ENCODE measurements at regions of chr5 and their contacts with region 1.

Region 1: DNA sequence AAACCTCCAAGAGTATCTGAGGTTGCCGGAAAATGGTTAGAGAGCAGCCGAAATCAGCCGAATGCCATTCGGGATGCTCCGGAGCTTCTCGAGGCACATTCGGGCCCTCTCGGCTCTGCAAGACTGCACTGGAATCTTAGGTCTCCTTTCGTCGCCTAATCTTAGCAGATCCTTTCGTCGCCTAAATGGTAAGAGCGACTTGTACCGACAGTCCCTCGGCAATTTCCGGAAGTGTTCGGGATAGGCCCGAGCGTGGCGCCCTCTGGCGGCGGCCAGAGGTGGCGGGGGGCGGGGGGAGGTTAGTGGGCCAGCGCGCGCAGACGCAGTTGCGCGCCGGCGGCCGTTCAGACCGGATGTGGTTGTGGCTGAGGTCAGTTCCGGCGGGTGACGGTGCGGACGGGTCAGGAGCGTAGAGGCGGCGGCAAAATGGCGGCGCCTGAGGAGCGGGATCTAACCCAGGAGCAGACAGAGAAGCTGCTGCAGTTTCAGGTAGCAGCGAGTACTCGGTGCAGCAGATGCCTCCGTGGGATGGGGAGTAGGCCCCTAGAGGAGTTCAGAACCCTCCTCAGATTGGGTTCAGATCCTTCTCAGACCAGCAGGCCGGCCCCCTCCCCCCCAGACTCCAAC is at the start of gene FAF2:
- DNase-seq: peak; percentile 92 to 99 (median 98)
- H3K4me3 ChIP-seq: peak within 1 kb of the TSS; percentile 98
- H3K4me3 Mint-ChIP-seq: peak within 1 kb of the TSS; percentile 91 to 99 (median 98)
- H3K27ac ChIP-seq: peak within 1 kb of the TSS; percentile 98
- H3K27ac Mint-ChIP-seq: peak within 1 kb of the TSS; percentile 96 to 100 (median 99)
- H3K4me1 ChIP-seq: peaks cover 25% of the 10 kb centered on the region
- H3K4me1 Mint-ChIP-seq: peaks cover 34 to 54% (median 46%) of the 10 kb centered on the region in 3 donors
- H3K27me3 ChIP-seq: no peaks in the 10 kb centered on the region
- H3K27me3 Mint-ChIP-seq: peaks cover 0 to 10% of the 10 kb centered on the region in 2 donors
- total RNA-seq, gene FAF2: 45.1 to 45.2 TPM

Region 2: GRCh38 chr5:176537608-176538504 is 89.8 kb after region 1 on chr5:
- CTCF ChIA-PET with region 1: interaction called, 33 read pairs
- POLR2A ChIA-PET with region 1: interaction called, 50 read pairs
- DNase-seq: peak; percentile 96 to 99 (median 97)
- H3K4me3 ChIP-seq: peak overlapping the region; percentile 99
- H3K4me3 Mint-ChIP-seq: peak overlapping the region; percentile 98 to 100 (median 99)
- H3K27ac ChIP-seq: peak overlapping the region; percentile 100
- H3K27ac Mint-ChIP-seq: peak overlapping the region; percentile 98 to 100 (median 99)
- H3K4me1 ChIP-seq: peaks cover 74% of the 10 kb centered on the region
- H3K4me1 Mint-ChIP-seq: peaks cover 72 to 77% (median 76%) of the 10 kb centered on the region in 3 donors
- H3K27me3 ChIP-seq: no peaks in the 10 kb centered on the region
- H3K27me3 Mint-ChIP-seq: peaks cover 0 to 9% of the 10 kb centered on the region in 2 donors

Region 3: GRCh38 chr5:176543428-176544173 is 95.5 kb after region 1 on chr5:
- CTCF ChIA-PET with region 1: interaction called, 33 read pairs
- POLR2A ChIA-PET with region 1: interaction called, 50 read pairs
- DNase-seq: peak; percentile 60 to 82 (median 74)
- H3K4me3 ChIP-seq: peak overlapping the region; percentile 92
- H3K4me3 Mint-ChIP-seq: peak overlapping the region; percentile 92 to 97 (median 93)
- H3K27ac ChIP-seq: peak overlapping the region; percentile 85
- H3K27ac Mint-ChIP-seq: peak overlapping the region; percentile 96 to 99 (median 98)
- H3K4me1 ChIP-seq: peaks cover 69% of the 10 kb centered on the region
- H3K4me1 Mint-ChIP-seq: peaks cover 65 to 82% (median 74%) of the 10 kb centered on the region in 3 donors
- H3K27me3 ChIP-seq: no peaks in the 10 kb centered on the region
- H3K27me3 Mint-ChIP-seq: peaks cover 0 to 1% of the 10 kb centered on the region in 2 donors

Region 4: DNA sequence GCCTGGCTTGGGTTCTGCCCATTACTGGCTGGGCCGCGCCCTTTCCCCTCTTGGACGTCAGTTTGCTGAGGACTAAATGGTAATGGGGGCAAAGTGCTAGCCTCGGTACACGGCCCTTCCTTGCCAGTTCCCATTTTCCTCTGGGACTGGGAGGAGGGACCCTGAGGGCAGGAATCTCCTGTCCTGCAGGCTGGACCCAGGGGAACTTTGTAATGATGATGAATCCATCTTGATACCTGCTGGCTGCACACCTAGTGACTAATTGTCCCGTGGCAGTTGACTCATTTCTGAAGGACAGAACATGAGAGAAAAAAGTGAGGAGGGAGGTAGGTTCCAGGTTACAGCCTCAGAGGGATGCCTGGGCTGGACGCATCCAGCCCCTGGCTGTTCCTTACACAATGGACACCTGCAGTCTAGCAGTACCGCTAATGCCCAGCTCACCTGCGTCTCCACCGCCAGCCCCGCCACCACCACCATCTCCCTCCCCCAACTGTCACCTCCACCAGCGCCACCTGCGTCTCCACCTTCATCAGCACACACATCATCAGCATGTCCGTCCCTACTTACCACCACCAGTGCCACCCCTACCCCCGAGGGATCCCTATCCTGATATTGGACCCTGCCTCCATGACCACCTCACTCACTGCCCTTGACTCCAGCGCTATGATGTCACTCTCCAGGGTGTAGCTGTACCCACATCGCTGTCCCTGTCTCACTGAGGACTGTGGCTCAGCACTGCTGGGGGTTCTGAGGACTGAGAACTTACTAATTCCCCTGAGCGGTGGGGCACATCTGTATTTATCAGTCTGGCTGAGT is 105.4 kb after region 1 on chr5:
- CTCF ChIA-PET with region 1: interaction called, 3 read pairs
- POLR2A ChIA-PET with region 1: interaction called, 10 read pairs
- DNase-seq: no peak
- H3K4me3 ChIP-seq: no peak overlapping the region
- H3K4me3 Mint-ChIP-seq: peak overlapping the region in 3 of 7 donors; percentile 14 to 61 (median 38)
- H3K27ac ChIP-seq: no peak overlapping the region
- H3K27ac Mint-ChIP-seq: peak overlapping the region in 7 of 8 donors; percentile 33 to 95 (median 47)
- H3K4me1 ChIP-seq: peaks cover 53% of the 10 kb centered on the region
- H3K4me1 Mint-ChIP-seq: peaks cover 37 to 65% (median 39%) of the 10 kb centered on the region in 3 donors
- H3K27me3 ChIP-seq: no peaks in the 10 kb centered on the region
- H3K27me3 Mint-ChIP-seq: no peaks in the 10 kb centered on the region